ENCODE measurements at regions of chr21 and their contacts with region 1.

Region 1: DNA sequence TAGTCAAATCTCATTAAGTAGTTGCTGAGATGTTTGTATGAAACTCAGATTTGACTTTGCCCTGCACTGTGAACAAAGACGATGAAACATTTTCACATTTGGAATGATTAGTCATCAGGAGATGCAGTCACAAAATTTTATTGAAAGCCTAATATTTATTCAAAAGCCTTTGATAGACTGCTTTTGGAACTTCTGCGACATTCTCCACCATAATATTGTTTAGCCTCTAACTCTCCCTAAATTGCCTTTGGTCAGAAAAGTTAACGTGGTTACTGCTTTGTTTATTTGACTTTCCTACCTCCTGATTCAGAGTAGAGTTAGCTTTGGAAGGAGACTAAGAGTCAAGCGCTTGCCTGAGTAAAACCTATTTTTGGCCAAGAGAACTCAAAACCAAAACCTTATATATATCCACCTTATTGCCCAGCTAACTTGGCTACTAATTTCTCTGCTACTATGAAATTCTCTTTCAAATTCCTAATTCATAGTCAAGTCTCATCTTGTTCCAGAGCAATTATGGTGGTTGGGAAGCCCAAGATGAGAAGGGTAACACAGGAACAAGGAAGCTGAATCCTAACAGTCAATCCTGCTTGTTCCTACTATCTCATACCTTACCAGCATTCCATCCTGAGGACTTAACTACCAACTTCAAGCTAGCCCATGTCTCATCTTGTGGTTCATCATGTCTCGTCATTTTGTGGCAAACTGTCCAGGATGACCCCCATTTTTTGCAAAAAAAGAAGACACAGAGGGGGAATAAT is 429.6 kb downstream of the USP25 start:
- DNase-seq: no peak
- H3K4me3 ChIP-seq: no peak overlapping the region
- H3K27ac ChIP-seq: no peak overlapping the region
- H3K4me1 ChIP-seq: no peaks in the 10 kb centered on the region
- H3K27me3 ChIP-seq: no peaks in the 10 kb centered on the region
- CTCF ChIP-seq: no peak
- EP300 ChIP-seq: no peak
- POLR2A ChIP-seq: no peak

Region 2: DNA sequence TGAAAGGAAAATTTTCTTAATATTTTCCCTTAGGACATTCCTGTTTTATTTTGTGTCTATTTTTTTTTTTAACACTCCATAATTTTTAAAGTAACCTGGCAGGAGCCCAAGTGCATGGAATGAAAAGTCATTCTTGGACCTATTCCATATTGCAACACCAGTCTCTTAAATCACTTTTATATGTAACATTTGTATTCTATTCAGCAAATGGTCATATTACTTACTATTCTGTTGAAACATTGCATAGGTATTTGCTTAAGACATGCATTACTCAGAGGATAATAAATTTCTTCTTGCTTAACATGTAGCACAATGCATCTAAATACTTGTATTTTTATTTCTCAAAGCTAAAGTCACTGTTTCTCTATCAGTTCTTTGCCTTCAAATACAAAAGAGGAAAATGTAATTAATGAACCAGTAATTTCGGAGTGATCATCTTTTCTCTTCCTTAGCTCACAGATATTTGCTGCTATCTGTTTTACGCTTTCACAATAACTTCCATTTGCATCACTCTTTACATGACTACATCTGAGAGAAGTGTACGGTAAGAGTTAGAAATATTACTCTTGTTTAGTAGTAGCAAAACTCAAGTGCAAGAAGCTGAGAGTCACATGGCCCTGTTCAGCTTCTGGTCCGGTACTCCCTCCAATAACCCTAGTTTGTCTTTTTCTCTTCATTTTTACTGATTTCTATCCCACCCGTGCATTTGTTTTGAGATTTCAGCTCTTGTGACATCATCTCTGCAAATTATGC is 34.8 kb before region 1 on chr21:
- intact Hi-C with region 1: loop called (anchors 5 kb)
- DNase-seq: no peak
- H3K4me3 ChIP-seq: no peak overlapping the region
- H3K27ac ChIP-seq: peak overlapping the region in 1 of 4 donors; percentile 29
- H3K4me1 ChIP-seq: peaks cover 0 to 5% (median 0%) of the 10 kb centered on the region in 4 donors
- H3K27me3 ChIP-seq: no peaks in the 10 kb centered on the region
- CTCF ChIP-seq: no peak
- EP300 ChIP-seq: no peak
- POLR2A ChIP-seq: no peak

Measured in esophagus muscularis mucosa (tissue), 4 donors.